Activated CD4-positive, alpha-beta memory T cell treated with anti-CD3 and anti-CD28 coated beads for 36 hours (primary cell): ENCODE measurements at regions of chr2 and their contacts with region 1.

Region 1: GRCh38 chr2:157898591-157898996 is 22.5 kb upstream of the ACVR1 start:
- DNase-seq: peak; percentile 84
- H3K4me3 Mint-ChIP-seq: peak overlapping the region; percentile 82
- H3K27ac Mint-ChIP-seq: peak overlapping the region; percentile 99
- H3K4me1 Mint-ChIP-seq: peaks cover 82% of the 10 kb centered on the region
- H3K27me3 Mint-ChIP-seq: no peaks in the 10 kb centered on the region

Region 2: GRCh38 chr2:157312866-157313486 is 585.6 kb before region 1 on chr2:
- CTCF ChIA-PET with region 1: no interaction called
- POLR2A ChIA-PET with region 1: no interaction called
- intact Hi-C with region 1: loop called (anchors 5 kb)
- DNase-seq: no peak
- H3K4me3 Mint-ChIP-seq: no peak overlapping the region
- H3K27ac Mint-ChIP-seq: no peak overlapping the region
- H3K4me1 Mint-ChIP-seq: peaks cover 34% of the 10 kb centered on the region
- H3K27me3 Mint-ChIP-seq: peaks cover 2% of the 10 kb centered on the region

Region 3: DNA sequence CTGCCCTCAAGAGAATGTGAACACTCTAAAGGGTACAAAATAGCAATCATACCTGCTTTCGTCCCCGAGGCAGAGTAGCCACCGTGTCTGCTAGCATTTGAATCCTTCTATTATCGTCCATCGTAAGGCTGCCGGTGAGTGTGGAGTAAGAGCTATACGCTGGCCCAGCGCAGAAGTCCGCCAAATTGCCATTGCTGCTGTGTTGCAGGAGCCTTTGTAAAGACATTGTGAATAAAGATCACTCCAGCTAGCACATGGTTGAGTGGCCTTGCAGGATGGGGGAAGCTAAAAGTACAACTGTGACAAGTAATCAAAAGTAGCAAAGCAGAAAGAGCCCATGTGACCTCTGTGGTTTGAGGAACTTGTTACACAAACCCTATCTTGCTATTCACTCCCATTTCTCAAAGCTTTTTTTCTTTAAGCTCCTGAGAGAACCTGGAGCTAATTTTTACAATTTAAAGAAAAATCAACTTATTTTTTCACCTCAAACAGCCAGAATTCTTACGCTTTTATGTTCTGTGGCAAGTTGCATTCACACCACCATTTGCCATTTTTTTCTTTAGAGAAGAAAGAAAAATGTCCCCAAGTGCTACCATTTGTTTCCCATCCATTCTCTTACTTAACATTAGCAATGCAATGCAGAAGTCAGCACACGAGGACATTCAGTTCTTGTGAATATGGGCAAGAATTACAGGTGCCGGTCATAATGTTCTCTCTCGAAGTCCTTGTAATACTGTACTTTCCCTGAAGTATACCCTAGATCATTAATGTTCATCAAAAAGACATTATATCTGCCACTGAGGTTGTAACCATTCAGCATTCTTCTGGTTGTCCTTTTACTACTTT is 454.6 kb before region 1 on chr2 and contains the start of gene CYTIP:
- CTCF ChIA-PET with region 1: no interaction called
- POLR2A ChIA-PET with region 1: interaction called, 11 read pairs
- intact Hi-C with region 1: no loop called
- DNase-seq: peak; percentile 82
- H3K4me3 Mint-ChIP-seq: peak within 1 kb of the TSS; percentile 92
- H3K27ac Mint-ChIP-seq: peak within 1 kb of the TSS; percentile 99
- H3K4me1 Mint-ChIP-seq: peaks cover 37% of the 10 kb centered on the region
- H3K27me3 Mint-ChIP-seq: peaks cover 2% of the 10 kb centered on the region
- total RNA-seq, gene CYTIP: 369 to 388 TPM

Region 4: GRCh38 chr2:157628477-157629415 is 269.8 kb before region 1 on chr2 and contains the start of gene ACVR1C:
- CTCF ChIA-PET with region 1: interaction called, 4 read pairs
- POLR2A ChIA-PET with region 1: no interaction called
- intact Hi-C with region 1: loop called (anchors 2 kb)
- DNase-seq: peak; percentile 79
- H3K4me3 Mint-ChIP-seq: peak within 1 kb of the TSS; percentile 86
- H3K27ac Mint-ChIP-seq: peak within 1 kb of the TSS; percentile 9
- H3K4me1 Mint-ChIP-seq: peaks cover 31% of the 10 kb centered on the region
- H3K27me3 Mint-ChIP-seq: peaks cover 8% of the 10 kb centered on the region
- total RNA-seq, gene ACVR1C: 1.3 to 2.0 TPM

Region 5: DNA sequence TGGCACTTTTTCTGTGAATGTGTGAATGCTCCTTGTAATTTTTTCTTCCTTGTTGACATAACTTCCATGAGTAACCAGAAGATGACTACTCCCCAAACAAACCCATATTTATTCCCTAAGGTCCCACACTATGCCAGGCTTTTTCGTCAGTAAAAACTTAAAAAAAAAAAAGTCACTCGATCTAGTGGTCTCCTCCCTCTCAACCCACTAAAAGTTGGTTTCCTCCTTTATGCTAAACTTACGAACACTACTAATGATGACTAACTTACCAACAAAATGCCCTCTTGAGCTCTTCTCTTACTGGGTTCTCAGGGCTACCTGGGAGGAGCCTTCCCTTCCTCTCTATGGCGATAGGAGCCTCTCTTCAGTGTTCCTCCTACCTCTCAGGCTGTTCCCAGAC is 40.7 kb before region 1 on chr2:
- CTCF ChIA-PET with region 1: interaction called, 4 read pairs
- POLR2A ChIA-PET with region 1: interaction called, 6 read pairs
- intact Hi-C with region 1: loop called (anchors 1 kb)
- DNase-seq: no peak
- H3K4me3 Mint-ChIP-seq: no peak overlapping the region
- H3K27ac Mint-ChIP-seq: no peak overlapping the region
- H3K4me1 Mint-ChIP-seq: peaks cover 45% of the 10 kb centered on the region
- H3K27me3 Mint-ChIP-seq: no peaks in the 10 kb centered on the region

Region 6: GRCh38 chr2:158006961-158007719 is 108.5 kb after region 1 on chr2:
- CTCF ChIA-PET with region 1: interaction called, 8 read pairs
- POLR2A ChIA-PET with region 1: no interaction called
- intact Hi-C with region 1: loop called (anchors 1 kb)
- DNase-seq: peak; percentile 25
- H3K4me3 Mint-ChIP-seq: no peak overlapping the region
- H3K27ac Mint-ChIP-seq: no peak overlapping the region
- H3K4me1 Mint-ChIP-seq: peaks cover 6% of the 10 kb centered on the region
- H3K27me3 Mint-ChIP-seq: peaks cover 2% of the 10 kb centered on the region